ENCODE measurements at regions of chr6 and their contacts with region 1.

Region 1: GRCh38 chr6:26537846-26538571 is at the start of gene HMGN4:
- DNase-seq: peak in 1 of 2 experiments; percentile 87
- H3K4me3 ChIP-seq: peak within 1 kb of the TSS; percentile 73 to 87 (median 80)
- H3K27ac ChIP-seq: peak within 1 kb of the TSS; percentile 84
- H3K4me1 ChIP-seq: peaks cover 0 to 4% (median 3%) of the 10 kb centered on the region in 4 experiments; a peak in 5 of 7 replicates
- H3K27me3 ChIP-seq: no peaks in the 10 kb centered on the region
- CTCF ChIP-seq: no peak
- EP300 ChIP-seq: no peak
- POLR2A ChIP-seq: peak in 1 of 2 experiments; percentile 65; a peak in 1 of 3 replicates
- RAD21 ChIP-seq: no peak
- total RNA-seq, gene HMGN4: 61.9 and 66.4 TPM in 2 replicates

Region 2: DNA sequence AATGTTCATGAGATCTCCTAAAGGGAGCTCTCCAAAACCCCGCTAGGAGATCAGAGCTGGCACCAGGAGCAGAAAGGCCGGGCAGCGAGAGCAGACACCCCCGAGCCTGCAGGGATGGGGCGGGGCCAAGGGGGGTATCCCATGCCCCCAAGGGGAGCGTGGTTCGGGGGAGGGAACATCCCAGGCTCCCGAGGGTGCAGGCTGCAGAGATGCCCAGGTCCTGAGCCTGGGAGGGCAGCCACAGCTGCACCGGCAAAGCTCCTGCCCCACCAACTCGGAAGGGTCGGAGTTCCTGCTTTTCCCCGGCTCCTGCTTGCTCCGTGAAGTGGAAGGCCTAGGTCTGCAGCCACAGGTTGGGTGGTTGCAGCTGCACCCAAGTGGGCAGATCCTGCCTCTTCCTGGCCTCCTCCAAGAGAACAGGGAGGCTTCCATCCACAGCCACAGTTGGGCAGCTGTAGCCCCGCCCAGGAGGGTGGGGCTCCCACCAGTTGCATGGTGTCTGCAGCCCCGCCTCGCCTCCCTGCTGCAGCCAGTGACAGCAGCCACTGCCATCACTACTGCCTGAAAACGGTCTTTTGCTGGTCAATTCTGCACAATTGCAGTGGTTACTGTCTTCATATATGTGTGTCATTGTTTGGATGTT is 1776.7 kb before region 1 on chr6:
- CTCF ChIA-PET with region 1: no interaction called
- POLR2A ChIA-PET with region 1: no interaction called
- DNase-seq: no peak
- H3K4me3 ChIP-seq: no peak overlapping the region
- H3K27ac ChIP-seq: no peak overlapping the region
- H3K4me1 ChIP-seq: no peaks in the 10 kb centered on the region
- H3K27me3 ChIP-seq: no peaks in the 10 kb centered on the region
- CTCF ChIP-seq: no peak
- EP300 ChIP-seq: no peak
- POLR2A ChIP-seq: no peak
- RAD21 ChIP-seq: no peak

Region 3: GRCh38 chr6:26520853-26521599 is 17.0 kb before region 1 on chr6:
- CTCF ChIA-PET with region 1: interaction called, 4 read pairs
- POLR2A ChIA-PET with region 1: interaction called, 36 read pairs
- DNase-seq: peak in 1 of 2 experiments; percentile 91
- H3K4me3 ChIP-seq: peak overlapping the region; percentile 58 to 94 (median 84)
- H3K27ac ChIP-seq: peak overlapping the region; percentile 84; the same call in 1 of the 2 replicates
- H3K4me1 ChIP-seq: peaks cover 0 to 3% (median 2%) of the 10 kb centered on the region in 4 experiments; a peak in 2 of 7 replicates
- H3K27me3 ChIP-seq: no peaks in the 10 kb centered on the region
- CTCF ChIP-seq: no peak
- EP300 ChIP-seq: no peak
- POLR2A ChIP-seq: peak; percentile 18 to 46; a peak in 2 of 3 replicates
- RAD21 ChIP-seq: no peak

Region 4: DNA sequence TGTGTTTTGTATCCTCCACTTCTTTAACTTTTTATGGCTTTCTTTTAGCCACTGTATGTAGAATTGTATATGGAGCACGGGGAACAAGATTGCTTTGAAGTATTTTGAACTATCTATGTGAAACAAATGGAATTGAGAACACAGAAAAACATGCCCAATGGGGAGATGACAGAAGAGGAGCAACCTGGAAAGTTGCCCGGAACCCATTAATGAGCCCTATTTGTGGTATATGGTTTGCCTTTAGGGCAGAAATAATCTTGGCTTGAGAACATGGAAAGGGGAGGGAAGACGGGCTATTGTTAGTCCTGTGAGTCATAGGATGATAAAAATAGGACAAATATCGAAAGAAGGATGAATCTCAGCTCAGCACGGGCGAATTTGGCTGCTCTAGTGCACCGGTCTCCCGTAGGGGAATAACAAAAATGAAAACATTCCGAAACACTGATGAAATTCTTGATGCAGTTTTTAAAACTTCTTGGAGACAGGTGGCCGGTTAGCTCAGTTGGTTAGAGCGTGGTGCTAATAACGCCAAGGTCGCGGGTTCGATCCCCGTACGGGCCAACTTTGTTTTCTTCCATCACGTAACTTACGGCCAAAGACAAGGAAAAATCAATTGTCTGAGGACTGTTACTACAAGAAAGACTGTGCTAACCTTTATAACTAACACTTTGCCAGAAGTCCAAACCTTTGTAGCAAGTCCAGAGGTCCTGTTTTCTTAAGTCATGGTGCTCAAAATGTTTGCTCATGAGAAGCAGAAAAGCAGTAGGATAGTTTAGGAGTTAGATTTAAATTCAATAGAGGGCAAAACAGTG is 15.8 kb after region 1 on chr6:
- CTCF ChIA-PET with region 1: interaction called, 7 read pairs
- POLR2A ChIA-PET with region 1: interaction called, 40 read pairs
- DNase-seq: peak in 1 of 2 experiments; percentile 92
- H3K4me3 ChIP-seq: peak overlapping the region; percentile 77 to 96 (median 80)
- H3K27ac ChIP-seq: no peak overlapping the region
- H3K4me1 ChIP-seq: no peaks in the 10 kb centered on the region; a peak in 2 of 7 replicates
- H3K27me3 ChIP-seq: no peaks in the 10 kb centered on the region
- CTCF ChIP-seq: no peak
- EP300 ChIP-seq: no peak
- POLR2A ChIP-seq: no peak
- RAD21 ChIP-seq: no peak